Cardiac septum (tissue), 1 donor: ENCODE measurements at regions of chr11 and their contacts with region 1.

Region 1: GRCh38 chr11:8813658-8814057 is 97.3 kb upstream of the AKIP1 start:
- DNase-seq: no peak

Region 2: GRCh38 chr11:8638300-8638699 is 175.4 kb before region 1 on chr11:
- intact Hi-C with region 1: no loop called
- DNase-seq: no peak

Region 3: DNA sequence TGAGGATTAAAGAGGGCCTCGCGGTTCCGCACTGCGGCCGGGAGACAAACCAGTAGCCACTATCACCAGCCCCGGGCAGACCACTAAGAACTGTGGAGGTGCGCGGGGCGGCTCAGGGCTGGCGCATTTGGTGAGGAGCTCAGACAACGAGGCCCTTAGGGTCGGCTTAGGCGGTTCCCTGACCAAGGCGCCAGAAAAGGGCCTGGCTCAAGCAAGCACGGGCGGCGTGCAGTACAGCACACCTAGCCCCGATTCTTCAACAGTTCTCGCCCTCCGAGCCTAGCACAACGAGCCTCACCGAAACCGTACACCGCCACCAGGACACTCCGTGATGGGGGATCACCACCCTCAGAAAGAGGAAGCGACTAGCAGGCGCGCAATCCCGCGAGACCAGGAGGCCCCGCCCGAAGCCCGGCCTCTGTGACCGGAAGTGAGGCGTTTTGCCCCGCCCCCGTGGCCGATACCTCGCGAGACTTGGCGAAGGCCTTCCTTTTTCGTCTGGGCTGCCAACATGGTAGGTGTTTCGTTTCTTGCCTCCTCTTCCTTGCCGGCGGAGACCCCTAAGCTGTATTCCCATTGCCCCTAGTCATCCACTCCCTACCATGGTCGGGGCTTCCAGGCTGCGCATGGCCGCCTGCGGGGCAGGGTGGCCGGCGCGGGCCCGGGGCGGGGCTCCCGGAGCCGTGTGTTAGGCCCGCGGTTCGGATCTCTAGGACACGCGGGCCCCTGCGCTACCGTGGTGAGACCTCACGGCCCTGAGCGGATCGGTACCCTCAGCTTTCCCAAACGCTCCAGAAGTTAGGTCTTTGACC is 131.1 kb before region 1 on chr11 and contains the starts of genes RPL27A and TRIM66:
- intact Hi-C with region 1: loop called (anchors 2 kb)
- DNase-seq: peak; percentile 99
- total RNA-seq, gene RPL27A: 462 TPM
- total RNA-seq, gene TRIM66: 3.0 TPM

Region 4: DNA sequence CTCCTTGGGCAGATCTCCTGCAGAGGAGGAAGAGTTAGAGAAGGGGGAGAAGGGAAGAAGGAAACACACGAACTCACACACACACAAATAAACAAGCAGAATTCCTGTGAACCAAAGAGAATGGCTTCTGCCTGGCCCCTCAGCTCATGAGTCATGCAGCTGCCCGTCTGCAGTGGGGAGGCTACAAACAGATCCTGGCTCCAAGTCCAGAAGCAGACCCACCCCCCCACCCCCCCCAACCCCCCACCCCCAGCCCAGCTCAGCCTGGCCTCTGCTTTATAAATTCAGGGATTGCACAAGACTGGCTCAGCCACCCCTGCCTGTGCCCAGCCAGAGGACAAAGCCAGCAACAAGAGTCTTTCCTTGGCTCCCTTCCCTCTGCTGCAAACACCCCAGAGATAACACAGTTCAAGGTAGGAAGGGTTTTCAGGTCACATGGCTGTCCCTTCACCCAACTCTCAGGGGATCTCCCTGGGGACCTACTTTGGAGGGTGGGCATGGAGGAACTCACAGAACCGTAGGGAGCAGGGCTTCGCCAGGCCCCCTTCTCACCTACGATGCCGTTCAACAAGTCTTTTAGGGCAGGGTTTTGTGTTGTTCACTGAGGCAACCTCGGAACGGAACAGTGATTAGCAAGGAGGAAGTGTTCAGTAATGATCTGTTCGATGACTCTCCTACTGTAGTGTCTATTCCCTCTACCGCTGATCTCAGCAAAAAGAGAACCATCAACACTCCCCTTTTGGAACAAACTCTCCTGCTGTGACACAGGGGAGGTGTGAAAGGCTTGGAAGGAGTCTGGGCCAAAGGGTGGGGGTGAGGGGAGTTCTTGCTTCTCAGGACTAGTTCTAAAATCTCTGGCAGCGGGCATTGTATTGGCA is 95.5 kb before region 1 on chr11:
- intact Hi-C with region 1: loop called (anchors 5 kb)
- DNase-seq: no peak

Region 5: GRCh38 chr11:8768625-8769333 is 44.9 kb before region 1 on chr11:
- intact Hi-C with region 1: loop called (anchors 5 kb)
- DNase-seq: no peak

Region 6: DNA sequence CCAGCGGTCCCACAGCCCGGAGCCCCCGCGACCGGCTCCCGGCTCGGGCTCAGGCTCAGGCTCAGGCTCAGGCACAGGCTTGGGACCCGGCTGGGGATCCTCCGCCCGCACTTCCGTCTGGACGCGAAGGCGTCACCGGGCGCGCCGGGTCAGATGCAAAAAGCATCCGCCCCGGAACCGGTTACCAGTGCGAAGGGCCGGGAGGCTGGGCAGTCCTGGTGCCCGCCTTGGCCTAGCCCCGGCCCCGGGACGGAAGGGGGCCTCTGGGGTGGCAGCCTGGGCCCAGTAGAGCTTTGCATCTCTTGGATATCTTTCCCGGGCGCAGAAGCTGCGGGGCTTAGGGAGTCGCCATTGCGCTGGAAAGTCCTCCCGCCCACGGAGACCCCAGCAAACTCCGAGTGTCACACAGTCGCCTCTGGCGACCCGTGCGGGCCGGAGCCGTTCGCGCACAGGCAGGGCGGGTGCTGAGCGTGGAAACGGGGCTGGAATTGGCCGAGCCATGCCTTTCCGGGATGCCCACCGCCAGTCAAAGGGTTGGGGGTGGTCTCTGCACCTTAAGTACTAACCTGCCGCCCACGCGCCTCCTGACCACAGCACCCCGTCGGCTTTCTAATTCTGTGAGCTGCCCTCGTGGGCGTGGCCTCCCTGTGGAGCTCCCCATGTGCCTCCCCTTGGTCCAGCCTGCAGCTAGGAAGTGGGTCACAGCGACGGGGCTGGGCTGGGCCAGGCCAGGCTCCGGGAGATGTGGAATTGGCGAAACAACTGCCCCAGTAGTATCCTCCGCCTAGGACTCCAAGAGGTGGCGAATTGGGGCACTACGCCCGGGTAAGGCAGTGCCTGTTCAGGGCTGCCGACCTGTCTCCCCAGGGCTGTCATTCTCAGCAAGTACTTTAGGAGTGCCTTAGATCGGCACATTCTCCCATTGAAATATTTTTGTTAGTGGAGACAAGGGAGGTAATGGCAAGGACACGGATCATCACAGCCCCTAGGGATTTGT is 151.0 kb after region 1 on chr11 and contains the start of gene TMEM9B:
- intact Hi-C with region 1: loop called (anchors 5 kb)
- DNase-seq: peak; percentile 97
- total RNA-seq, gene TMEM9B: 43.7 TPM